ENCODE measurements at regions of chr17 and their contacts with region 1.

Region 1: DNA sequence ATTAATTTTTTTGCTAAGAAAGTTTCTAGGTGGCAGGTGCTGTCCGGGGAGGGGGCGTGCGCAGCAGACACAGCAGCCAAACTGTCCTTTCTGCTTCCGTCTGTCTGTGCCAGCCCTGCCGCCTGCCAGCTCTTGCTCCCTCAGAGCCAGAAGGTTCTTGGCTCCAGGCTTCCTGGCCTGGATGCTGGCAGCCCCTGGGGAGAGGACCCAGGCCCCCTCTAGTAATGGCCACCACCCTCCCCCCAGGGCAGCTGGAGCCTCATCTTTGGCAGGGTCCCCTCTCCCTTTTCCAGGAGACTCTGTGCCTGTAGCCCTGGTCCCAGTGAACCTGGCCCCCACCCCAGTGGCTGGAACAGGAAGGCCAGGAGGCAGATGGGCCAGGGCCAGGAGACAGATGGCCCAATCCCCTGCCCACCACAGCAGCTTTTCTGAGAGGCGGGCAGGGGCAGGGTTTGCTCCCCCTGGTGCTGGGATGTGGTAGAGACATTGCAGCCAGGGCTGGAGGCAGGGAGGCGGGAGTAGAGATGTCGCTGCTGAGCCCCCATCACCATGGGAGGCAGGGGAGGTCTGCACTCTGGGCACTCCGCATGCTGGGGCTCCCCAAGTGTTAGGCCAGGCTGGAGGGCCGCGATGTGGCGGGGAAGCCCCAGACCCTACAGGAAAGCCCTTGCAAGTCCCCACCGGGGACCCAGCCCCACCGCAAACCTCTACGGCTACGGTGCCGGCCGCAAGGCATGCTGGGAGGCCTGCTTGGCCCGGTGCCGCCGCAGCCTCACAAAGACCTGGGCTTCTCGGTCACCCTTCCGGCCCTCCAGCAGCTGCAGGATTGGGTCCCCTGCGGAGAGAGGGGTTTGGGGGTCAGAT is 16.7 kb downstream of the UNC13D start:
- DNase-seq: peak; percentile 82
- H3K4me3 ChIP-seq: peak overlapping the region in 2 of 3 experiments; percentile 21 to 30
- H3K27ac ChIP-seq: peak overlapping the region; percentile 22
- H3K4me1 ChIP-seq: peaks cover 7% of the 10 kb centered on the region
- H3K27me3 ChIP-seq: no peaks in the 10 kb centered on the region
- CTCF ChIP-seq: peak; percentile 85 to 91
- POLR2A ChIP-seq: peak; percentile 65

Region 2: GRCh38 chr17:75771334-75772281 is 55.9 kb before region 1 on chr17:
- CTCF ChIA-PET with region 1: interaction called, 29 read pairs
- POLR2A ChIA-PET with region 1: interaction called, 3 read pairs
- dilution Hi-C with region 1: no loop called
- intact Hi-C with region 1: loop called (anchors 1 kb)
- DNase-seq: no peak
- H3K4me3 ChIP-seq: no peak overlapping the region
- H3K27ac ChIP-seq: no peak overlapping the region
- H3K4me1 ChIP-seq: no peaks in the 10 kb centered on the region
- H3K27me3 ChIP-seq: no peaks in the 10 kb centered on the region
- CTCF ChIP-seq: no peak
- POLR2A ChIP-seq: no peak

Region 3: DNA sequence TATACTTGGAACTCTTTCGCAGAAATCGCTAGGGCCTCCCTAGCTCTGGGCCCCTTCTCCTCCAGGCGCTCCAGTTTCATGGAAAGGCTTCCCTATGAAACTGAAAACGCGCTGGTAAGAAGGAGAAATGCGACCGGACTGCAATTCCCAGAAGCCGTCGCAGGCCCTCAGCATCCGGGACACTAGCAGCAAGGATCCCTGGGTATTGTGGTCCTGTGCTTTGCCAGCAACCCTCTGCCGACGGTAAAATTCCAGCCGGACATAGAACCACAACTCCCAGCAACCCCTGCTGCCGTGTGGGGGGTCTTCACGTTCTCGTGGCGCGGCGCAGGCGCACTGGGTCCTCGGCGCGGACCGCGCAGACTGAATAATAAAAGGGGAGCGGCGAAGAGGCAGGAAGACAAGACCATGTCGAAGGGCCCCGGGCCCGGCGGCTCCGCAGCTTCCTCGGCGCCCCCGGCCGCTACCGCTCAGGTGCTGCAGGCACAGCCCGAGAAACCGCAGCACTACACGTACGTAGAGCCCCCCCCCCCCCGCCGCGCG is 42.9 kb before region 1 on chr17 and contains the start of gene UNK:
- CTCF ChIA-PET with region 1: interaction called, 73 read pairs
- POLR2A ChIA-PET with region 1: interaction called, 11 read pairs
- dilution Hi-C with region 1: no loop called
- intact Hi-C with region 1: loop called (anchors 1 kb)
- DNase-seq: peak; percentile 99
- H3K4me3 ChIP-seq: peak within 1 kb of the TSS in 2 of 3 experiments; percentile 32 to 55
- H3K27ac ChIP-seq: peak within 1 kb of the TSS; percentile 88
- H3K4me1 ChIP-seq: peaks cover 29% of the 10 kb centered on the region
- H3K27me3 ChIP-seq: no peaks in the 10 kb centered on the region
- CTCF ChIP-seq: no peak
- POLR2A ChIP-seq: peak; percentile 9
- total RNA-seq, gene UNK: 23.2 and 25.9 TPM in 2 replicates

Region 4: GRCh38 chr17:75845049-75845860 is 17.8 kb after region 1 on chr17:
- CTCF ChIA-PET with region 1: interaction called, 24 read pairs
- POLR2A ChIA-PET with region 1: interaction called, 7 read pairs
- dilution Hi-C with region 1: no loop called
- intact Hi-C with region 1: no loop called
- DNase-seq: peak; percentile 70
- H3K4me3 ChIP-seq: no peak overlapping the region
- H3K27ac ChIP-seq: peak overlapping the region; percentile 31
- H3K4me1 ChIP-seq: peaks cover 39% of the 10 kb centered on the region
- H3K27me3 ChIP-seq: no peaks in the 10 kb centered on the region
- CTCF ChIP-seq: peak; percentile 79 to 87
- POLR2A ChIP-seq: no peak

Region 5: DNA sequence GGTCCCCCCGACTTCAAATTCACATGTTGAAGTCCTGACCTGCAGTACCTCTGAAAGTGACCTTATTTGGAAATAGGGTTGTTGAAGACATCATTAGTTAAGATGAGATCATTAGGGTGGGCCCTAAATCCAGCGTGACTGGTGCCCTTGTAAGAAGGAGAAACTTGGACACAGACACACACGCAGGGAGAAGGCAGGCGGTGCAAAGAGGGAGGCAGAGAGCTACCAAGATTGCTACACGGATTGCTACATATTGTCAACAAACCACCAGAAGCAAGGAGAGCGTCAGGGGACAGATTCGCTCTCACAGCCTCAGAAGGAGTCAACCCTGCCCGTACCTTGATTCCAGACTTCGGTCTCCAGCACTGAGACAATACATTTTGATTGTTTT is 34.4 kb after region 1 on chr17:
- CTCF ChIA-PET with region 1: interaction called, 16 read pairs
- POLR2A ChIA-PET with region 1: no interaction called
- dilution Hi-C with region 1: no loop called
- intact Hi-C with region 1: no loop called
- DNase-seq: no peak
- H3K4me3 ChIP-seq: no peak overlapping the region
- H3K27ac ChIP-seq: no peak overlapping the region
- H3K4me1 ChIP-seq: peaks cover 10% of the 10 kb centered on the region
- H3K27me3 ChIP-seq: no peaks in the 10 kb centered on the region
- CTCF ChIP-seq: no peak
- POLR2A ChIP-seq: no peak

Measured in endothelial cell of umbilical vein (primary cell).